ENCODE measurements at regions of chr15 and their contacts with region 1.

Region 1: GRCh38 chr15:71364117-71364584 is 248.9 kb downstream of the THSD4 start:
- DNase-seq: peak; percentile 98 to 100
- H3K4me3 ChIP-seq: peak overlapping the region; percentile 1; the same call in 1 of the 2 replicates
- H3K4me1 ChIP-seq: peaks cover 39% of the 10 kb centered on the region
- H3K27me3 ChIP-seq: no peaks in the 10 kb centered on the region

Region 2: DNA sequence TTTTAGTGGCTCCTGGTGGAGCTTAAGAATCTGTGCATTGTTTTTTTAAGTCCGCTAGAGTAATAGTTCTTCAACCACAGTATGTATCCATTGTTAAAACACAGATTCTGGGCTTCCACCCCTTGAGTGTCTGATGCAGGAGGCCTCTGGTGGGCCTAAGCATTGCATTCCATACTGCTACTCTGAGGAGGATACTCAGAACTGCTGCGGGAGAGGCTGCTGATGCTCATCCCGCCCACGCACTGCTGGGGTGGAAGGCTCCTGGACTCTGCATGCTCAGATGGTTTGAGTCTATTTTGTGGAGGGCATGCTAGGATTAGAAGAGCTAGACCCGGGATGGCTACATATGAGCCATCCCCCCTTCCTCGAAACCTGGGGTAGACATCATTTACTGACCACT is 174.4 kb before region 1 on chr15:
- in situ Hi-C with region 1: loop called (anchors 5 kb)
- DNase-seq: peak in 1 of 2 experiments; percentile 9
- H3K4me3 ChIP-seq: no peak overlapping the region
- H3K4me1 ChIP-seq: peaks cover 27% of the 10 kb centered on the region
- H3K27me3 ChIP-seq: no peaks in the 10 kb centered on the region

Measured in HAP-1 (cell line).